B cell (primary cell): ENCODE measurements at regions of chr22 and their contacts with region 1.

Region 1: DNA sequence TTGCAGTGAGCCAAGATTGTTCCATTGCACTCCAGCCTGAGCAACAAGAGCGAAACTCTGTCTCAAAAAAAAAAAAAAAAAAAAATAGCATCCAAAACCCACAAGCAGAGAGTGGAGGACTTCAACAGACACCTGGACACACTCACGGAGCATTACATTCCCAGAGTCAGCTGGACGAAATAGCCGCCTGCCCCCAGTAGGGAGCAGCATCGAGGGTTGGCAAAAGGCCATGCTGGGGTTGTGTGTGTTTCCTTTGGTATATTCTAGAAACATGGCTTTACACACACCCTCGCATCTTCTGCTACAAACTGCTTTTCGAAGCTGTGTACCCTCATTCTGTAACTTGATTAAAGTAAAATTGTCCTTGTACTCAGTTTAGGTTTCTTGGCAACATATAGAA is 5.3 kb downstream of the ADA2 start:
- DNase-seq: peak; percentile 50
- ATAC-seq: no peak
- H3K4me3 ChIP-seq: no peak overlapping the region
- H3K4me3 Mint-ChIP-seq: peak overlapping the region; percentile 19
- H3K27ac ChIP-seq: peak overlapping the region in 1 of 2 donors; percentile 81
- H3K27ac Mint-ChIP-seq: peak overlapping the region; percentile 88
- H3K4me1 ChIP-seq: peaks cover 30 to 40% of the 10 kb centered on the region in 2 donors
- H3K4me1 Mint-ChIP-seq: peaks cover 46% of the 10 kb centered on the region
- H3K27me3 ChIP-seq: no peaks in the 10 kb centered on the region
- H3K27me3 Mint-ChIP-seq: no peaks in the 10 kb centered on the region
- CTCF ChIP-seq: peak; percentile 54

Region 2: GRCh38 chr22:16834971-16835370 is 379.0 kb before region 1 on chr22:
- CTCF ChIA-PET with region 1: no interaction called
- POLR2A ChIA-PET with region 1: no interaction called
- intact Hi-C with region 1: no loop called
- DNase-seq: no peak
- ATAC-seq: no peak
- H3K4me3 ChIP-seq: no peak overlapping the region
- H3K4me3 Mint-ChIP-seq: no peak overlapping the region
- H3K27ac ChIP-seq: no peak overlapping the region
- H3K27ac Mint-ChIP-seq: no peak overlapping the region
- H3K4me1 ChIP-seq: no peaks in the 10 kb centered on the region
- H3K4me1 Mint-ChIP-seq: no peaks in the 10 kb centered on the region
- H3K27me3 ChIP-seq: no peaks in the 10 kb centered on the region
- H3K27me3 Mint-ChIP-seq: peaks cover 7% of the 10 kb centered on the region
- CTCF ChIP-seq: no peak

Region 3: GRCh38 chr22:17158568-17159503 is 55.1 kb before region 1 on chr22 and contains the start of gene HDHD5:
- CTCF ChIA-PET with region 1: no interaction called
- POLR2A ChIA-PET with region 1: no interaction called
- intact Hi-C with region 1: loop called (anchors 1 kb)
- DNase-seq: peak; percentile 93
- ATAC-seq: peak; percentile 92
- H3K4me3 ChIP-seq: peak within 1 kb of the TSS; percentile 30 to 92 (median 84)
- H3K4me3 Mint-ChIP-seq: peak within 1 kb of the TSS; percentile 88
- H3K27ac ChIP-seq: peak within 1 kb of the TSS; percentile 38 to 75
- H3K27ac Mint-ChIP-seq: peak within 1 kb of the TSS; percentile 75
- H3K4me1 ChIP-seq: peaks cover 12 to 21% of the 10 kb centered on the region in 2 donors
- H3K4me1 Mint-ChIP-seq: peaks cover 21% of the 10 kb centered on the region
- H3K27me3 ChIP-seq: no peaks in the 10 kb centered on the region
- H3K27me3 Mint-ChIP-seq: no peaks in the 10 kb centered on the region
- CTCF ChIP-seq: no peak
- total RNA-seq, gene HDHD5: 17.7 and 23.3 TPM in 2 replicates

Region 4: GRCh38 chr22:17237038-17237668 is 23.2 kb after region 1 on chr22:
- CTCF ChIA-PET with region 1: interaction called, 13 read pairs
- POLR2A ChIA-PET with region 1: interaction called, 7 read pairs
- intact Hi-C with region 1: no loop called
- DNase-seq: peak; percentile 73
- ATAC-seq: peak; percentile 89
- H3K4me3 ChIP-seq: peak overlapping the region in 4 of 5 experiments; percentile 36 to 62 (median 50)
- H3K4me3 Mint-ChIP-seq: peak overlapping the region; percentile 87
- H3K27ac ChIP-seq: peak overlapping the region; percentile 49 to 69
- H3K27ac Mint-ChIP-seq: peak overlapping the region; percentile 90
- H3K4me1 ChIP-seq: peaks cover 12 to 21% of the 10 kb centered on the region in 2 donors
- H3K4me1 Mint-ChIP-seq: peaks cover 17% of the 10 kb centered on the region
- H3K27me3 ChIP-seq: no peaks in the 10 kb centered on the region
- H3K27me3 Mint-ChIP-seq: no peaks in the 10 kb centered on the region
- CTCF ChIP-seq: no peak

Region 5: DNA sequence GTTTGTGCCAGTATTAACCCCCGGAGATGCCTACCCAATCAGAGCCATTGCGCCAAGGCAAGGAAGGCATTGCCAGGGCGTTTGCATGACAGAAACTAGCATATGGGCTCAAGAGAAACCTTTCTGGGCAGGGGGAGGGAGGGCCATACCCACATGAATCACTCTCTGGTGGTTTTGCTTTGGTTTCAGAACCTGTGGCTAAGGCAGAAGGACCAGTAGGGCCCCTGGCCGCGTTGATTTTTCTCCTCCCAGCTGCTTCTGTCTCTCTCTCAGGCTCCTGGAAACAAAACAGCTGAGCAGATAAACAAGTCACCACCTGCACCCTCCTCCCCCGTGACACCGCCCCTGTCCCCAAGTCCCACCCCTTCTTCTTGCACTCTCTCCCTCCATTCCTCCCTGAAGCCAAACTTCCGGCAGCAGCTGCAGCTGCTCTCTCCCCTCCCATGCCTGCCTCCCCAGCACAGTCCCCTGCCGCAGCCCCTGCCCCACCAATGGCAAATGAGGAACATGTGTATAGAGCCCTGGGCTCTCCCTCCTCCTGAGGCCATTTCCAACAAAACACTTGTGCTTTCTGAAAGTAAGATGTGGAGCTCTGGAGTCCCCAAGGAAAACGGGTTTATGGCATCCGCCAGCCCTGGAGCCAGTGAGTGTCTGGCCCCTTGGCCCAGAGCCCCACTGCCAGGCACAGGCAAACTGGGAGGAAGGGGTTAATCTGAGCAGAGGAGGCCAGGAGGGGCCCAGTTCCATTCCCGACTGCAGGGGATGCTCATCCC is 44.2 kb after region 1 on chr22:
- CTCF ChIA-PET with region 1: interaction called, 9 read pairs
- POLR2A ChIA-PET with region 1: interaction called, 25 read pairs
- intact Hi-C with region 1: loop called (anchors 1 kb)
- DNase-seq: peak; percentile 75
- ATAC-seq: peak; percentile 92
- H3K4me3 ChIP-seq: peak overlapping the region in 3 of 5 experiments; percentile 23 to 28 (median 27)
- H3K4me3 Mint-ChIP-seq: peak overlapping the region; percentile 72
- H3K27ac ChIP-seq: peak overlapping the region; percentile 34 to 65
- H3K27ac Mint-ChIP-seq: peak overlapping the region; percentile 95
- H3K4me1 ChIP-seq: peaks cover 17 to 26% of the 10 kb centered on the region in 2 donors
- H3K4me1 Mint-ChIP-seq: peaks cover 29% of the 10 kb centered on the region
- H3K27me3 ChIP-seq: no peaks in the 10 kb centered on the region
- H3K27me3 Mint-ChIP-seq: no peaks in the 10 kb centered on the region
- CTCF ChIP-seq: no peak

Region 6: DNA sequence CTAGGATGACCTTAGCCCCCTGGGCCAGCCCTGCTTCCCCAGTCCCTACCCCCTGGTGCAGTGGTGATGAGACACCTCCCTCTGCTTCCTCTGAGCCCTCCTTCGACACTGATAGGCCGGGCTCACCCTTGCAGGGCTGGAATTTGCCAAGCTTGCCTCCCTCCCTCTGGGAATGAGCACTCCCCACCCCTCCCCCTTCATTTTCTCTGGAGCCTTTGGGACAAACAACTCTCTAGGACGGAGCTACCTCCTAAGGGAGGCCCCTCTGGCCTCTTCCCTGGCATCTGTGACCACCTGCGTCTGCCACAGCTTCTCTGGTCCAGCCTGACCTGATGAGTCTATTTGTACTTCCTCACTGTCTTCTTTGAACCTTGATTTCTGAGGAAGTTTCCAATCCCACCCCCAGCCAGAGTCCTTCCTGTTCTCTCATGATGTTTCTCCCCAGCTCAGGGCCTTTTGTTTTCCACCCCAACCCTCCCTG is 58.6 kb after region 1 on chr22:
- CTCF ChIA-PET with region 1: interaction called, 14 read pairs
- POLR2A ChIA-PET with region 1: interaction called, 11 read pairs
- intact Hi-C with region 1: no loop called
- DNase-seq: no peak
- ATAC-seq: no peak
- H3K4me3 ChIP-seq: no peak overlapping the region
- H3K4me3 Mint-ChIP-seq: no peak overlapping the region
- H3K27ac ChIP-seq: no peak overlapping the region
- H3K27ac Mint-ChIP-seq: no peak overlapping the region
- H3K4me1 ChIP-seq: peaks cover 0 to 5% of the 10 kb centered on the region in 2 donors
- H3K4me1 Mint-ChIP-seq: peaks cover 7% of the 10 kb centered on the region
- H3K27me3 ChIP-seq: no peaks in the 10 kb centered on the region
- H3K27me3 Mint-ChIP-seq: no peaks in the 10 kb centered on the region
- CTCF ChIP-seq: no peak

Region 7: GRCh38 chr22:17368554-17369438 is 154.8 kb after region 1 on chr22:
- CTCF ChIA-PET with region 1: interaction called, 4 read pairs
- POLR2A ChIA-PET with region 1: interaction called, 4 read pairs
- intact Hi-C with region 1: loop called (anchors 2 kb)
- DNase-seq: peak; percentile 64
- ATAC-seq: peak; percentile 73
- H3K4me3 ChIP-seq: peak overlapping the region; percentile 11 to 65 (median 50)
- H3K4me3 Mint-ChIP-seq: peak overlapping the region; percentile 89
- H3K27ac ChIP-seq: no peak overlapping the region
- H3K27ac Mint-ChIP-seq: peak overlapping the region; percentile 47
- H3K4me1 ChIP-seq: peaks cover 27 to 34% of the 10 kb centered on the region in 2 donors
- H3K4me1 Mint-ChIP-seq: peaks cover 31% of the 10 kb centered on the region
- H3K27me3 ChIP-seq: peaks cover 0 to 44% (median 25%) of the 10 kb centered on the region in 4 experiments
- H3K27me3 Mint-ChIP-seq: peaks cover 45% of the 10 kb centered on the region
- CTCF ChIP-seq: no peak

Region 8: DNA sequence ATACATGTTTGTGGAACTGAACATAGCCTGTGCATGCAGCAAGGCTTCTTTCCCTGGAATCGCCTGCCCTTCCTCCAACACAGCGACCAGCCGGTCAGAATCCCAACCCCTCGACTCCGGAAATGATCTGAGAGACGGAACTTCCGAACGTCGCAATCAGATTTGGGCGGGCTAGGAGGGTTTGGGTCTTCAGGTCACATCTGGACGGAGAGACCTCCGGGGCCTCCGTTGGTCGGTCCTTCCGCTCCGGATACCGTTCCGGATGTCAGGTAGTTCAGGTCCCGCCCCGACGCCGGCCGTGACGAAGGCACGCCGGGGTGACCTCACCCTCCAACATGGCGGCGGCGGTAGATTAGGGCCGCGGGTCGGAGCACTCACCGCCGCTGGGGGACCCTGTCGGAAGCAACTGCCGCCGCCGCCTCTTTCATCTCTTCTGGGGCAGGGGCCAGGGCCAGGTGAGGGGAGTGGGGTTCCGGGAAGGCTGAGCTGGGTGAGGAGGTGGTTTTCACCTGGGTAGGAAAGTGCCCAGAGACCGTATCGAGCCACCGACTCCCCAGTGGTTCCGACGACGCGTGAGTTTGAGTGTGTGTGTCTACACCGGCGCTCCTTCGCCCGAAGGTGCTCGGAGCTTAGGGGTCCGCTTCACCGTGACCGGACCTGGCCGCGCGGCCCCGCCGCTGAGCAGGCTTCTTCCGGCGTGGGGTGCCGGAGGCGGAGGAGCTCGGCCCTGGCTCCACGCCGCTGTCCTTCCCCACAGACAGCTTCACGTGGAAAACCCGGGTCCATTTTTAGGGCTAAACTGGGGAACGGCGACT is 424.7 kb after region 1 on chr22 and contains the start of gene BCL2L13:
- CTCF ChIA-PET with region 1: no interaction called
- POLR2A ChIA-PET with region 1: interaction called, 3 read pairs
- intact Hi-C with region 1: loop called (anchors 5 kb)
- DNase-seq: peak; percentile 94
- ATAC-seq: peak; percentile 94
- H3K4me3 ChIP-seq: peak within 1 kb of the TSS; percentile 67 to 100 (median 81)
- H3K4me3 Mint-ChIP-seq: peak within 1 kb of the TSS; percentile 96
- H3K27ac ChIP-seq: peak within 1 kb of the TSS; percentile 100
- H3K27ac Mint-ChIP-seq: peak within 1 kb of the TSS; percentile 97
- H3K4me1 ChIP-seq: peaks cover 15 to 20% of the 10 kb centered on the region in 2 donors
- H3K4me1 Mint-ChIP-seq: peaks cover 28% of the 10 kb centered on the region
- H3K27me3 ChIP-seq: no peaks in the 10 kb centered on the region
- H3K27me3 Mint-ChIP-seq: no peaks in the 10 kb centered on the region
- CTCF ChIP-seq: no peak
- total RNA-seq, gene BCL2L13: 29.9 and 37.2 TPM in 2 replicates